ENCODE measurements at regions of chr2 and their contacts with region 1.

Region 1: DNA sequence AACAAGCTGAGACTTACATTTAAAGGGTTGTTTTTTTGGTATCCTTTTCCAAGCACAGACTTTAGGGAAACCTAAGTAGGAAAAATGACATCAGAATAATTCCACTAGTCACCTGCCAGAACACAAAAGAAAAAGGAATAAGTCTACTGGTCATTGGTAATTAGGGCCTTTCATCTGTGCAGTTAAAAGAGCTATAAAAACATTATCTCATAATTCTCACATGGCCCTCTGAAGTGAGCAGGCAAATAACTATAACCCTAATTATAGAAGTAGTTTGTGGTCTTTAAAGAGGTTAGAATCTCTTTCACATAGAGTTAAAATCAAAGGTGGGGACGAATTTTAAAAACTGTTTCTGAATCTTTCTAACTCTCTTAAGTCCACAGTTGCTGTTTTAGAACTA is 111.1 kb upstream of the B3GNT2 start:
- DNase-seq: no peak
- H3K4me3 ChIP-seq: no peak overlapping the region
- H3K27ac ChIP-seq: no peak overlapping the region
- H3K4me1 ChIP-seq: no peaks in the 10 kb centered on the region
- H3K27me3 ChIP-seq: no peaks in the 10 kb centered on the region
- CTCF ChIP-seq: no peak

Region 2: DNA sequence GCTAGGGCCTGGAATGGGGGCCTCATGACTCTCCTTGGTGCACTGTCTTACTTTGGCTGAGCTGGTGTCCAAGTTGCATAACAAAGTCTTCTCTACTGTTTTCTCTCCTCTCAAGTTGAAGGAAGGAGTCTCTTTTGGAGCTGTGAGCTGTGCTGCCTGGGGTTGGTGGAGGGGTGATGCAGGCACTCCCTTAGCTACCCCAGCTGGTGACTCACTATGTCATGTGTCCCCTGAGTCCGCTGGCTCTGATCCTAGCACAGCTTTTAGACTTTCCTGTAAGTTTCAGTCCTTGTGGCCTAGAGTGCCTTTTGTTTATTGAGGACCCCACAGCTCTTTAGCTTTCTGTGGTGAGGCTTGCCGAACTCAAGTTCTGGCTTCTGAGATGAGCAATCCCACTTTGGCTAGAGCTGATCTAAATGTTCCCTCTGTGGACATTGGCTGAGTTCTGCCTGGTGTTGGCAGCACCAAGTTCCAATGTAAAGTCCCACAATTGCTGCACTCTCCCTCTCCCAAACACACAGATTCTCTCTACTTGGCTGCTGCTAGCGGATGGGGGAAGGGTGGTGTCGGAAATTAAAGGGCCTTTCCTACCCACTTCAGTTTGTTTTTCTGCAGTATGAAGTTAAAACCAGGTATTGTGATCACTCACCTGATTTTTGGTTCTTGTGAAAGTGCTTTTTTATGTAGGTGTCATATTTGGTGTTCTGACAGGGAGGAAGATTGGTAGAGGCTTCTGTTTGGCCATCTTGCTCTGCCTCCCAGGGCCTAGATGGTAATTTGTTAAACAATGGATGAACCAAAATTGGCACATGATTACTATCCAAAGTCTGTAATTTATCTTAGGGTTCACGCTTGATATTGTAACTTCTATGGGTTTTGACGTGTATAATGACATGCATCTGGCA is 96.1 kb before region 1 on chr2:
- CTCF ChIA-PET with region 1: no interaction called
- dilution Hi-C with region 1: no loop called
- in situ Hi-C with region 1: no loop called
- intact Hi-C with region 1: no loop called
- DNase-seq: no peak
- H3K4me3 ChIP-seq: no peak overlapping the region
- H3K27ac ChIP-seq: no peak overlapping the region
- H3K4me1 ChIP-seq: no peaks in the 10 kb centered on the region
- H3K27me3 ChIP-seq: no peaks in the 10 kb centered on the region
- CTCF ChIP-seq: no peak

Region 3: GRCh38 chr2:62102402-62102920 is 17.7 kb after region 1 on chr2:
- CTCF ChIA-PET with region 1: no interaction called
- dilution Hi-C with region 1: no loop called
- in situ Hi-C with region 1: no loop called
- intact Hi-C with region 1: no loop called
- DNase-seq: no peak
- H3K4me3 ChIP-seq: no peak overlapping the region
- H3K27ac ChIP-seq: no peak overlapping the region
- H3K4me1 ChIP-seq: no peaks in the 10 kb centered on the region
- H3K27me3 ChIP-seq: no peaks in the 10 kb centered on the region
- CTCF ChIP-seq: no peak

Region 4: DNA sequence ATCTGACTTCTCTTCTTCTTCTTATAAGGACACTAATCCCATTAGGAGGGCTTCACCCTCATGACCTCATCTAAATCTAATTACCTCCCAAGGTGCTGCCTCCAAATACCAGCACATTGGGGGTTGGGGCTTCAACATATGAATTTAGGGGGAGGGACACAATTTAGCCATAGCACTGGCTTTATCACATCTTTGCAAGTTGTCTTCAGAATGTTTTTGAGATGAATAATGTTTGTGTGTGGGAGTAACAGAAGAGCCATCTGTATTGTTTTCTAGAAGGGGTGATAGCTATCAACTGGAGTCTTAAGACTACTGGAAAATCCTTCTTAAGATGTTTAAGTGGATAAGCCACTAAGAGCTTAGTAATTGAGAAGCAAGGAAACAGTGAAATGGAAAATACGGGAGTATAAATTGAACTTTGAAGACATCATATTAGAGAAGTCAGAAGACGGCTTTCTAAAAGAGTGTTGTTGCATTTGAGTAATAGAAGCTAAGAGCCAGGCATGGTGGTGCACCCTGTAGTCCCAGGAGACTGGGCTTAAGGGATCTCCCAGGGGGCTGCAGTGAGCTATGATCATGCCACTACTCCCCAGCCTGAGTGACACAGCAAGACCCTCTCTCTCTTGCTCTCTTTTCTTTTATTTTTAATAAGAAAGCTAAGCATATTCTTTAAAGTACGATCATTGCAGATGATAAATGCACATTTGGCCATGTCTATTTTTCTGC is 78.5 kb after region 1 on chr2:
- CTCF ChIA-PET with region 1: no interaction called
- dilution Hi-C with region 1: loop called (anchors 5 kb)
- in situ Hi-C with region 1: no loop called
- intact Hi-C with region 1: no loop called
- DNase-seq: no peak
- H3K4me3 ChIP-seq: no peak overlapping the region
- H3K27ac ChIP-seq: no peak overlapping the region
- H3K4me1 ChIP-seq: no peaks in the 10 kb centered on the region
- H3K27me3 ChIP-seq: no peaks in the 10 kb centered on the region
- CTCF ChIP-seq: no peak

Region 5: GRCh38 chr2:62186156-62186905 is 101.5 kb after region 1 on chr2:
- CTCF ChIA-PET with region 1: no interaction called
- dilution Hi-C with region 1: loop called (anchors 5 kb)
- in situ Hi-C with region 1: no loop called
- intact Hi-C with region 1: no loop called
- DNase-seq: no peak
- H3K4me3 ChIP-seq: no peak overlapping the region
- H3K27ac ChIP-seq: no peak overlapping the region
- H3K4me1 ChIP-seq: no peaks in the 10 kb centered on the region
- H3K27me3 ChIP-seq: no peaks in the 10 kb centered on the region
- CTCF ChIP-seq: no peak